Left ventricle myocardium inferior (tissue), 1 donor: ENCODE measurements at regions of chr1 and their contacts with region 1.

Region 1: DNA sequence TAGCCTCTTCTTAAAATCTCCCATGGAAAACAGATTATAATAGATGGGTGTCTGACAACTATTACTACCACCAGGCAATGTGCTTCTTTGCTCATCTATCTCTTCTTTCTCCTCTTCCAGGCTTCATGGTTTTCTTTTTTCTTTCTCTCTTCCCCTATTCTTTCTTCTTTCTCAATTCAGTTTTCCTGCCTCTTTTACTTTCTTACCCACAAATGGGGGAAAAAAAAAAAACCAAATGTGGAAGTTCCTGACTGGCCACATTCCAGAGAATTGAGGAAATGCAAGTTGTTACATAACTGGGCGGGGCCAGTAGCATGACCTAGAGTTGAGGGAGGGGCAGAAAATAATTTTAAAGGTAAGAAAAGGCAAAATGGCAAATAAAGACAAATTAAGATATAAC is 10.9 kb upstream of the SMG7 start:
- DNase-seq: no peak
- H3K4me3 ChIP-seq: no peak overlapping the region
- H3K27ac ChIP-seq: no peak overlapping the region
- H3K4me1 ChIP-seq: no peaks in the 10 kb centered on the region
- H3K27me3 ChIP-seq: no peaks in the 10 kb centered on the region
- CTCF ChIP-seq: no peak

Region 2: DNA sequence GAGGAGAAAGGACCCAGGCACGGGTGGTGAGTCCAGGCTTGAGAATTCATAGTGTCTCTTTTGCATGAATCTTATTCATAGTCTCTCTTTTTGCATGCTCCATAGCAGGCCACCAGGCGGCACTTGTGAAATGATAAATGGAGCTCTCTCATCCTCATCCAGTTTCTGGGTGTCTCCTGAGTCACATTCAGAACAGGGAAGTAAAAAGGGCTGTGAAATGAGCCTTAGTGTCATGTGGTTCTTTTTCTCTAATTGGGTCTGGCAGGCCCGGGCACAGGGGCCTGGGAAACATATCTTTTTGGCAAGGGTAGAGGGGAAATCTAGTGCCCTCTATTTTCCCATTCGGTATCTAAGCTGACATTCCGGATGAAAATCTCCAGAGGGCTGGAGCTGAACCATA is 148.0 kb after region 1 on chr1:
- intact Hi-C with region 1: loop called (anchors 10 kb)
- DNase-seq: peak; percentile 58
- H3K4me3 ChIP-seq: no peak overlapping the region
- H3K27ac ChIP-seq: peak overlapping the region; percentile 72
- H3K4me1 ChIP-seq: peaks cover 27% of the 10 kb centered on the region
- H3K27me3 ChIP-seq: no peaks in the 10 kb centered on the region
- CTCF ChIP-seq: peak; percentile 69